Sciatic nerve (tissue), 2 donors: ENCODE measurements at regions of chr11 and their contacts with region 1.

Region 1: DNA sequence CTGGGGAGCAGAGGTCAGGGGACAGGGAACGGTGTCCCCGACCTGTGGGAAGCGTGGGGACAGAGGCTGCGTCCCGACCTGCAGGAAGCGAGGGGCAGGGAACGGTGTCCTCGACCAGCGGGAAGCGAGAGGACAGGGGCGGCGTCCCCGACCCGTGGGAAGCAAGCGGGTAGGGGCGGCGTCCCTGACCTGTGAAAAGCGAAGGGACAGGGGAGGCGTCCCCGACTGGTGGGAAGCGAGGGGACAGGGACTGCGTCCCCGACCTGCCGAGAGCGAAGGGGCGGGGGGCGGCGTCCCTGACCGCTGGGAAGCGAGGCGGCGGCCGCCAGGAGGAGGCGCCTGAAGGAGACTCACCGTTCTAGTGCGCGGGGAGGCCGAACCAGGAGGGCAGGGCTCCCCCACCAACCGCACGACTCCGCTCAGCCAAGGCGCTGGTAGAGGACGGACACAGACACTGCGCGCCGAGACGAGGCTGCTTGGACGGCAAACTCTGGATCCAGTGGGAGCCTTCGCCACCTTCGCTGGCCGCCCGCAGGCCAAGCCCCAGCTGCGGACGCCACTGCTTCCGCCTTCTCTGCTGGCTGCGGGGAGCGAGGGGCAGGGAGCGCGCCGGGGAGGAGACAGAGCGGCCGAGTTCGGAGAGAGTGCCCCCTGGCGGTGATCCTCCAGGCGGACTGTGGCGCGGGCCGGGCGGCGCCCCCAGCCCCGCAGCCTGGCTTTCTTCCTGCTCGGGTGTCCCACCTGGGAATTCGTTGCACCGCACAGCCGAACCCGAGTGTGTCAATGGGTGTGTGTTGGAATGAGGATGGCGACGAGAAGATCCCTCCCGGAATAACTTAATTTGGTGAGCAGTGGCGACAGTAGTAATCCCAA is at the start of gene TRAF6:
- DNase-seq: peak; percentile 94
- ATAC-seq: peak; percentile 98
- total RNA-seq, gene TRAF6: 16.6 TPM

Region 2: DNA sequence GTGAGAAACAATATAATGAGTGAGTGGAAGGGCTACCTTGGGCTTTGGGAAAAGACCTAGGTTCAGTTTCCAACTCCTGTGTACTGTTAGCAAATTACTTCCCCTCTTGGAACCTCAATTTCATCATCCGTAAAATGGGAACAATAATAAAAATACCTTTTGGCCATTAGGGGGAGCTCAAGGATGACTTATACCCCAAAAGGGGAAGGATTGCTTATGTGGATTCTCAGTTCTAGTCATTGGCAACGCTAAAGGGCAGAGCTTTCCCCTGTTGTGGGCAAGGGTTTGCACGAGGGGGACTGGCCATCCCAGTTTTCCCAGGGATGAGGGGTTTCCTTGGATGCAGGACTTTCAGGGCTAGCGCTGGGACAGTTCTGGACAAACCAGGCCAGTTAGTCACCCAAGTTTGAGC is 217.6 kb before region 1 on chr11:
- intact Hi-C with region 1: loop called (anchors 10 kb)
- DNase-seq: no peak
- ATAC-seq: no peak